Right ventricle myocardium inferior (tissue), 1 donor: ENCODE measurements at regions of chr2 and their contacts with region 1.

Region 1: GRCh38 chr2:147843864-147844696 is 749 bp upstream of the ACVR2A start:
- DNase-seq: peak; percentile 95
- ATAC-seq: peak; percentile 96

Region 2: GRCh38 chr2:147558620-147559019 is 285.5 kb before region 1 on chr2:
- intact Hi-C with region 1: loop called (anchors 5 kb)
- DNase-seq: no peak
- ATAC-seq: no peak

Region 3: DNA sequence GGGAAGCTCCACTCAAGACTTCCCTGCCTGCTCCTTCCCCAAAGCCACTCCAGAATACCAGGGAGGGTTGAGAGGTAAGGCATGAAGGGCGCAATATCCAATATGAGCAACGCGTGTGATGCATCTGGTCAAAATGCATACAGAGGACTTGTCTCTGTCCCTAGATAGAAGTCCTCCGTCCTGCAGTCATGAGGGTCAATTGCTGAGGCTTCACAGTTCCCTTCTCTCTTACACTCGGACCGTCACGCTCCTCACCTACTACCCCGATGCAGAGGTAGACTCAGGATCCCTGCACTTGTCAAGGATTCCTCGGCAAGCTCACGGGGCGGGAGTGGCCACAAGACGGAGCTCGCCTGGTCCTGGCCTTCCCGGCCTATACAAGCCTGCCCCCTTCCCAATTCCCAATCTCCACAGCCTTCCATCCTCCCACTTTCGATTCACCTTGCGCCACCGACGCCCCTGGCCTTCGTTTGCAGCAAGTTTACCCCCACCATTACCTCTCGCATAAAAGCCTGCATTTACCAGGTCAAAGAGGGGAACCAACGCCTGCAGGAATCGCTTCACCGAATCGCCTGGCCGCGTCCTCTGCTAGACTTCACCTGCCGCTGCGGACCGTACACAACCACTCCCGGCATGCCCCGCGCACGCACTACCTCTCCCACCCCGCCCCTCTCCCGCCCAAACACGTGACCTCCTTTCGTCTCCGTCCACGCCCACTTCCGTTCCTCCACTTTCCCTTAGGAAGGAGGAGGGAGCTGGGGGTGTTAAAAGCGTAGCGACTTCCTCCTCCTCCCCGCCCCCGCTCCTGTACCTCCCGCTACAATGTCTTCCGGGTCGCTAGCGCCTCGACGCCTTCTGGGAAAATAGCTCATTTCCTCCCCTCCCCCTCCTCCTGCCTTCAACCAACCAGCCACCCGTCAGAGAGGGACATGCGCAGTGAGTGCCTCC is 176.3 kb after region 1 on chr2 and contains the start of gene ORC4:
- intact Hi-C with region 1: loop called (anchors 5 kb)
- DNase-seq: peak; percentile 98
- ATAC-seq: peak; percentile 99
- total RNA-seq, gene ORC4: 46.8 TPM